IMR-90 (cell line): ENCODE measurements at regions of chr1 and their contacts with region 1.

Region 1: DNA sequence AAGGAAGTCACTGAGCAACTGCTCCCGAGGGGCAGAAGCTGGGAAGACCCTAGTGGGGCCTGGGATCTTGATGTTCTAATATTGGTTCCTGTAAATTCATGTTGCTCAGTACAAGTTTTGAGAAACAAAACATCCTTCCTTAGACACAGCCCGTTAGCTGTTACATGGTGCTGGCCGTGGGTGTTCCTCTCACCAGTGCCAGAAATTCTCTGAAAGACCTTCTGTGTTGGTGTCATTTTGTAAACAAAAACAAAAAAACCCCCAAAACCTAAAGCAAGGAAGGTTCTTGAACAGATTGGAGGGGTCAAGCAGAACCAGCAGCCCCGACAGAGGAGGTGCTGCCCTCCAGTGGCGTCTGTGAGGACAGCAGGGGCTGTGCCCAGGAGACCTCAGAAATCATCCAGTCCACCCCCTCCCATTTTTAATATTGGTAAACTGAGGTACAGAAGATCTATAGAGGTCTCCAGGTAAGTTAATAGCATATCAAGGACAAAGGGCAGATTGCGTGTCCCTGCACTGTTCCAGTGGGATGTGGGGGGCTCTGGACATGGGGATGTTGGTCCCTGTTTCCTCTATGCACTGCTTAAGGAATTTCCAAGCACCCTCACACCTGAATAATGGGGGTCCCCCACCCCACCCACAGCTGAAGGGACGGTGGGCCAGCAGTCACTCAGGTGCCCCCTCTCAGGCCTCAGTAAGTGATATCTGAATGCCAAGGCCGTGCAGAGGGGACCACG is 38.2 kb downstream of the SLC2A7 start:
- DNase-seq: peak; percentile 32
- ATAC-seq: peak; percentile 85
- H3K4me3 ChIP-seq: no peak overlapping the region
- H3K27ac ChIP-seq: no peak overlapping the region
- H3K4me1 ChIP-seq: no peaks in the 10 kb centered on the region; the same call in none of the 2 replicates
- H3K27me3 ChIP-seq: peaks cover 1% of the 10 kb centered on the region; the same call in 1 of the 2 replicates
- CTCF ChIP-seq: peak; percentile 86
- POLR2A ChIP-seq: no peak
- RAD21 ChIP-seq: peak; percentile 75

Region 2: DNA sequence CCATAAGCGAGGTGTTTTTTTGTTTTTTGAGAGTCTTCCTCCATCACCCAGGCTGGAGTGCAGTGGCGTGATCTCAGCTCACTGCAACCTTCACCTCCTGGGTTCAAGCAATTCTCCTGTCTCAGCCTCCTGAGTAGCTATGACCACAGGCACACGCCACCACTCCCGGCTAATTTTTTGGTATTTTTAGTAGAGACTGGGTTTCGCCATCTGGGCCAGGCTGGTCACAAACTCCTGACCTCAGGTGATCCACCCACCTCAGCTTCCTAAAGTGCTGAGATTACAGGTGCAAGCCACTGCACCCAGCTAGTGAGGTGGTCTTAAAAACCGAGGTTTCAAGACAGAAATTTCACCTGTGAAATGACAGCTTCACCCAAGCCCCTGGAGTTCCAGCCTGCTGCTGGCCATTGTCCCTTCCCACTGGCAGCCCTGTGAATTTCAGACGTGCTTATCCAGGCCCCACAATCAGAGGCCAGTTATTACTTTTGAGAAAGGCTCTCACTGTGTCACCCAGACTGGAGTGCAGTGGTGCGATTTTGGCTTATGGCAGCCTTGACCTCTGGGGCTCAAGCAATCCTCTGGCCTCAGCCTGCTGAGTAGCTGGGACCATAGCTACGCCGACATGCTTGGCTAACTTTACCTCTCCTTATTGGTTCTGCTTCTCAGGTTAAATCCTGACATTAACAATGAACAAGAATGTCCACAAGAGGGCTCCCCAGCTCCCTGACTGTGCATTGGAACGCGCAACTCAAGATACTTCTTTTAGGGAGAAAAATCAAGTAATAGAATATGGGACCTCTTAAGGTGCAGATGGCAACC is 129.0 kb before region 1 on chr1:
- CTCF ChIA-PET with region 1: interaction called, 3 read pairs
- POLR2A ChIA-PET with region 1: no interaction called
- dilution Hi-C with region 1: no loop called
- in situ Hi-C with region 1: no loop called
- intact Hi-C with region 1: loop called (anchors 1 kb)
- DNase-seq: peak; percentile 67
- ATAC-seq: peak; percentile 38
- H3K4me3 ChIP-seq: no peak overlapping the region
- H3K27ac ChIP-seq: no peak overlapping the region
- H3K4me1 ChIP-seq: peaks cover 8% of the 10 kb centered on the region
- H3K27me3 ChIP-seq: no peaks in the 10 kb centered on the region
- CTCF ChIP-seq: peak; percentile 60
- POLR2A ChIP-seq: no peak
- RAD21 ChIP-seq: peak; percentile 56

Region 3: GRCh38 chr1:8873506-8874229 is 114.4 kb before region 1 on chr1:
- CTCF ChIA-PET with region 1: no interaction called
- POLR2A ChIA-PET with region 1: no interaction called
- dilution Hi-C with region 1: no loop called
- in situ Hi-C with region 1: no loop called
- intact Hi-C with region 1: loop called (anchors 5 kb)
- DNase-seq: peak; percentile 98
- ATAC-seq: peak; percentile 66
- H3K4me3 ChIP-seq: no peak overlapping the region
- H3K27ac ChIP-seq: peak overlapping the region; percentile 41
- H3K4me1 ChIP-seq: peaks cover 42% of the 10 kb centered on the region
- H3K27me3 ChIP-seq: no peaks in the 10 kb centered on the region
- CTCF ChIP-seq: no peak
- POLR2A ChIP-seq: peak; percentile 73
- RAD21 ChIP-seq: no peak

Region 4: DNA sequence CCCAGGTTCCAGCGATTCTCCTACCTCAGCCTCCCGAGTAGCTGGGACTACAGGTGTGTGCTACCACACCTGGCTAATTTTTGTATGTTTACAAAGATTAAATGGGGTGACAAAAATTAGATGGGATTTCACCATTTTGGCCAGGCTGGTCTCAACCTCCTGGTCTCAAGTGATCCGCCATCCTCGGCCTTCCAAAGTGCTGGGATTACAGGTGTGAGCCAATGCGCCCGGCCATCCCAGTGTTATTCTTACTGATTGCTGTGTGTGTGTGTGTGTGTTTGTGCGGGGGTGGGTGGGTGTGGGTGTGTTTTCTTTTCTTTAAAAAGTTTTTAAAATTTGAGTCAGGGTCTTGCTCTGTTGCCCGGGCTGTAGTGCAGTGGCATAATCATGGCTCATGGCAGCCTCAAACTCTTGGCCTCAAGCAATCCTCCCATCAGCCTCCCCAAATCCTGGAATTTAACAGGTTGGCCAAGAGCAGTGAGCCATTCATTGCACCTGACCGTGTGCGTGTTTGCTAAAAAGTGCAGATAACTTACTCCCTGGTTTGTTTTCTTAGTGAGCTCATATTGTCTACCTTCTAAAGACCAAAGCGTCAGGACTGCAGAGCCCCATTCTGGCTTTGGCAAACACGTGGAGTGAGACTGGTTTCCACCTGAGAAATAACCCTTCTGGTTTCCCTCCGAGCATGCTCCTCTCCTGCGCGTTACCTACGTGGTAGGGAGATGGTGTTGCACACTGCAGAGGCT is 74.8 kb before region 1 on chr1:
- CTCF ChIA-PET with region 1: interaction called, 4 read pairs
- POLR2A ChIA-PET with region 1: no interaction called
- dilution Hi-C with region 1: no loop called
- in situ Hi-C with region 1: loop called (anchors 5 kb)
- intact Hi-C with region 1: loop called (anchors 1 kb)
- DNase-seq: no peak
- ATAC-seq: no peak
- H3K4me3 ChIP-seq: no peak overlapping the region
- H3K27ac ChIP-seq: no peak overlapping the region
- H3K4me1 ChIP-seq: no peaks in the 10 kb centered on the region
- H3K27me3 ChIP-seq: peaks cover 2% of the 10 kb centered on the region; the same call in 1 of the 2 replicates
- CTCF ChIP-seq: no peak
- POLR2A ChIP-seq: no peak
- RAD21 ChIP-seq: no peak

Region 5: DNA sequence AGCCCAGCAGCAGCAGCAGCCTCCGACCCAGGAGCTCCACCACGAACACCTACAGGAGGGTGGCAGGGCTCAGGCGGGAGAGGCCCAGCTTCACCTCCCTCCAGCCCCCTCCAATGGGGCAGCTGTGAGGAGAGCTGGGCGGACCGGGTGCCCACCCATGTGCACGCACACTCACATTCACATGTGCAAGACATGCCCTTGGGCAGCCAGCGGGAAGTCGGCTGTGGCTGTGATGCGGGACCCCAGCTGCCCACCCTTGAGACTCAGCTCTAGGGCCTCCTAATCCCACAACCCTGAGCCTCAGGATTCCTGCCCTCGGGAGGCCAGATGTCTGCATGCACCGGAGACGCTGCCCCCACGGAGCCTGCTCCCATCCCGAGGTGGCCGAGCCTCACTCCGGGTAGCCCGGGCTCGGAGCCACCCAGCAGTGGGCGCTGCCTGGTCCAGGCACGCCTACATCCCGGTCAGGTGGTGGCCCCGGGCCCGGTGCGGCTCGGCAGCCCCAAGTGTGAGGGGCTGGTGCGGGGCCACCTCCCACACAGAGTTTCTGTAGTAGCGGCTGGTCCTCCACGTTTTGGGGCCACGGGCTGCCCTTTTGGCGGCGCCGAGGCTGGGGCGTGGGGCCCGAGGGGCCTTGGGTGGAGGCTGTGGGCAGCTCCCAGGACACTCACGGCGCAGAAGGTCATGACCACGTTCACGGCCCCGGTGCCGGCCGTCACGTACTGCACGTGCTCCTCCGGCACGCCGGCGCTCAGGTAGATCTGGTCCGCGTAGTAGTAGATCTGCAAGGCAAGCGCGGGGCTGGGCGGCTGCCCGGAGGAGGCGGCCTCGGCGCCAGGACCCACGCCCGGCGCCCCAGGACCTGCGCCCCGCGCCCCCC is 51.1 kb after region 1 on chr1:
- CTCF ChIA-PET with region 1: no interaction called
- POLR2A ChIA-PET with region 1: no interaction called
- dilution Hi-C with region 1: no loop called
- in situ Hi-C with region 1: no loop called
- intact Hi-C with region 1: no loop called
- DNase-seq: no peak
- ATAC-seq: no peak
- H3K4me3 ChIP-seq: no peak overlapping the region
- H3K27ac ChIP-seq: no peak overlapping the region
- H3K4me1 ChIP-seq: no peaks in the 10 kb centered on the region
- H3K27me3 ChIP-seq: peaks cover 45% of the 10 kb centered on the region
- CTCF ChIP-seq: no peak
- POLR2A ChIP-seq: no peak
- RAD21 ChIP-seq: no peak

Region 6: GRCh38 chr1:9101510-9102146 is 113.6 kb after region 1 on chr1:
- CTCF ChIA-PET with region 1: interaction called, 5 read pairs
- POLR2A ChIA-PET with region 1: no interaction called
- dilution Hi-C with region 1: no loop called
- in situ Hi-C with region 1: no loop called
- intact Hi-C with region 1: loop called (anchors 1 kb)
- DNase-seq: peak; percentile 68
- ATAC-seq: peak; percentile 81
- H3K4me3 ChIP-seq: no peak overlapping the region
- H3K27ac ChIP-seq: no peak overlapping the region
- H3K4me1 ChIP-seq: peaks cover 3% of the 10 kb centered on the region
- H3K27me3 ChIP-seq: no peaks in the 10 kb centered on the region
- CTCF ChIP-seq: peak; percentile 81
- POLR2A ChIP-seq: no peak
- RAD21 ChIP-seq: peak; percentile 82